ENCODE measurements at regions of chr1 and their contacts with region 1.

Region 1: GRCh38 chr1:116418091-116418830 is 45.2 kb downstream of the ATP1A1 start:
- DNase-seq: peak; percentile 61
- ATAC-seq: peak; percentile 83
- H3K4me3 ChIP-seq: peak overlapping the region; percentile 75 to 94 (median 91)
- H3K27ac ChIP-seq: peak overlapping the region; percentile 82
- H3K4me1 ChIP-seq: peaks cover 73% of the 10 kb centered on the region
- H3K27me3 ChIP-seq: no peaks in the 10 kb centered on the region; a peak in 1 of 5 replicates
- CTCF ChIP-seq: peak; percentile 35; the same call in 1 of the 2 replicates
- EP300 ChIP-seq: no peak; a peak in 1 of 4 replicates
- POLR2A ChIP-seq: peak; percentile 87 to 90
- RAD21 ChIP-seq: peak; percentile 64

Region 2: GRCh38 chr1:116345843-116346242 is 72.4 kb before region 1 on chr1:
- CTCF ChIA-PET with region 1: no interaction called
- POLR2A ChIA-PET with region 1: no interaction called
- in situ Hi-C with region 1: no loop called
- intact Hi-C with region 1: no loop called
- DNase-seq: no peak
- ATAC-seq: no peak
- H3K4me3 ChIP-seq: no peak overlapping the region
- H3K27ac ChIP-seq: no peak overlapping the region
- H3K4me1 ChIP-seq: 0 out of 2 replicates have a peak, but pooled peaks cover 5% of the 10 kb centered on the region
- H3K27me3 ChIP-seq: peaks cover 3 to 4% of the 10 kb centered on the region in 2 experiments; a peak in 1 of 5 replicates
- CTCF ChIP-seq: no peak
- EP300 ChIP-seq: no peak
- POLR2A ChIP-seq: no peak
- RAD21 ChIP-seq: no peak

Region 3: DNA sequence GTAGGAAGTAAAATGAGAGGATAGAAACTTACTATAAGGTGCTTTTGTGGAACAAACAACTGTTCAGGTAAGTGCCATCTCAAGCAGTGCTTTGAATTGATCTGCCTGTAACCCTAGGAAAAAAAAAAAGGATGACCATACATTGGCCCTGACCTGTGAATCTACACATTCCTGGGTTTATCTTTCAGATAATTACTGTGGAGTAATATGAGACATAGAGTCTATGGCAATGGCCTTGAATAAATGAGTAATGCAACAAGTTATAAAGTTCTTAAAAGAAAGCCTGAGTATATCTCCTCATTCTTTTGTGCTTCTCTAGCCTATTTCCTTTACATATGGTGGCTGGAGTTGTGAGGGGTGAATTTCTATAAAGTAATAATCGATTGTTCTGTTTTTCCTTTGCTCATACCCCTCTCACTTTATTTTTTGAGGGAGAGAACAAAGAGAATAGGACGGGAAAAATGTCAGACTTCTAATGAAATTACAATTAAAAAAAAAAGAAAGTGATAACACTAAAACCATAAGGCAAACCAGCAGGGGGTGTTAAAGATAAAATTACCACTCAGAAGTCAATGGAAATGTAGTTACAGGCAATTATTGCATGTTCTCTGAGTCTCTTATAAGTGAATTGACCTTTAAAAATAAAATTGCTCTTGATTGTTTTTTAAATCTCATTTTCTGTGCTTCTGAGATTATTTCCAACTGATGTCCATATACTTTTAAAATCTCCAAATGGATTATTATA is 57.7 kb before region 1 on chr1:
- CTCF ChIA-PET with region 1: no interaction called
- POLR2A ChIA-PET with region 1: no interaction called
- in situ Hi-C with region 1: no loop called
- intact Hi-C with region 1: no loop called
- DNase-seq: no peak
- ATAC-seq: no peak
- H3K4me3 ChIP-seq: no peak overlapping the region
- H3K27ac ChIP-seq: no peak overlapping the region
- H3K4me1 ChIP-seq: peaks cover 35% of the 10 kb centered on the region
- H3K27me3 ChIP-seq: peaks cover 0 to 8% of the 10 kb centered on the region in 2 experiments; a peak in 1 of 5 replicates
- CTCF ChIP-seq: 0 out of 2 replicates have a peak, but pooled peaks have one; percentile 21
- EP300 ChIP-seq: no peak
- POLR2A ChIP-seq: no peak
- RAD21 ChIP-seq: no peak

Region 4: GRCh38 chr1:116377541-116378529 is 40.4 kb before region 1 on chr1:
- CTCF ChIA-PET with region 1: no interaction called
- POLR2A ChIA-PET with region 1: interaction called, 18 read pairs
- in situ Hi-C with region 1: no loop called
- intact Hi-C with region 1: loop called (anchors 5 kb)
- DNase-seq: peak; percentile 79
- ATAC-seq: peak; percentile 21
- H3K4me3 ChIP-seq: peak overlapping the region; percentile 39 to 89 (median 84)
- H3K27ac ChIP-seq: peak overlapping the region; percentile 77
- H3K4me1 ChIP-seq: peaks cover 85% of the 10 kb centered on the region
- H3K27me3 ChIP-seq: peaks cover 0 to 3% of the 10 kb centered on the region in 2 experiments; a peak in 1 of 5 replicates
- CTCF ChIP-seq: no peak
- EP300 ChIP-seq: peak in 1 of 2 experiments; percentile 60; a peak in 2 of 4 replicates
- POLR2A ChIP-seq: peak in 1 of 2 experiments; percentile 41; a peak in 1 of 4 replicates
- RAD21 ChIP-seq: no peak

Region 5: GRCh38 chr1:116433275-116434257 is 15.3 kb after region 1 on chr1:
- CTCF ChIA-PET with region 1: no interaction called
- POLR2A ChIA-PET with region 1: interaction called, 37 read pairs
- in situ Hi-C with region 1: no loop called
- intact Hi-C with region 1: no loop called
- DNase-seq: peak; percentile 93
- ATAC-seq: peak; percentile 94
- H3K4me3 ChIP-seq: peak overlapping the region in 1 of 3 experiments; percentile 54; a peak in 2 of 6 replicates
- H3K27ac ChIP-seq: peak overlapping the region; percentile 53
- H3K4me1 ChIP-seq: peaks cover 52% of the 10 kb centered on the region
- H3K27me3 ChIP-seq: no peaks in the 10 kb centered on the region
- CTCF ChIP-seq: no peak
- EP300 ChIP-seq: peak in 1 of 2 experiments; percentile 50; a peak in 1 of 4 replicates
- POLR2A ChIP-seq: no peak
- RAD21 ChIP-seq: no peak

Region 6: DNA sequence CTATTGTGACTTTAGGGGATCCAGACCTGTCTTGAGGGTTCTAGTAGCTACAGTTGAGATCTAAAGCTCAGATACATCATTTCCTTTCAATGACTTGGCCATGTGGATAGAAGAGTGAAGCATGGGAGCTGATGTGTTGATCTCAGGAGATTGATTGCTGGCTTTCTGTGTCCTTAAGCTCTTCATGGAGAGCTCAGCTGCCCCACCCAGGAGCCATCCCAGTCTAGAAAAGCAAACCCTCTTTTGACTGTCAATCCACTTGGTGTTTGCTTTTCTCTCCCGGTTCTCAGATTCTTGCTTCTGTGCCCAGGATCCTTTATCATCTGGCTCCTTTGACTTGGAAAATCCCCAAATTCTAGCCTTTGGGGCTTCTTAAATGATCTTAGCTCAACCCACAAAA is 42.0 kb after region 1 on chr1:
- CTCF ChIA-PET with region 1: no interaction called
- POLR2A ChIA-PET with region 1: interaction called, 62 read pairs
- in situ Hi-C with region 1: loop called (anchors 5 kb)
- intact Hi-C with region 1: loop called (anchors 5 kb)
- DNase-seq: no peak
- ATAC-seq: peak; percentile 63
- H3K4me3 ChIP-seq: no peak overlapping the region
- H3K27ac ChIP-seq: no peak overlapping the region
- H3K4me1 ChIP-seq: peaks cover 30% of the 10 kb centered on the region
- H3K27me3 ChIP-seq: no peaks in the 10 kb centered on the region
- CTCF ChIP-seq: no peak
- EP300 ChIP-seq: no peak
- POLR2A ChIP-seq: no peak
- RAD21 ChIP-seq: no peak

Region 7: DNA sequence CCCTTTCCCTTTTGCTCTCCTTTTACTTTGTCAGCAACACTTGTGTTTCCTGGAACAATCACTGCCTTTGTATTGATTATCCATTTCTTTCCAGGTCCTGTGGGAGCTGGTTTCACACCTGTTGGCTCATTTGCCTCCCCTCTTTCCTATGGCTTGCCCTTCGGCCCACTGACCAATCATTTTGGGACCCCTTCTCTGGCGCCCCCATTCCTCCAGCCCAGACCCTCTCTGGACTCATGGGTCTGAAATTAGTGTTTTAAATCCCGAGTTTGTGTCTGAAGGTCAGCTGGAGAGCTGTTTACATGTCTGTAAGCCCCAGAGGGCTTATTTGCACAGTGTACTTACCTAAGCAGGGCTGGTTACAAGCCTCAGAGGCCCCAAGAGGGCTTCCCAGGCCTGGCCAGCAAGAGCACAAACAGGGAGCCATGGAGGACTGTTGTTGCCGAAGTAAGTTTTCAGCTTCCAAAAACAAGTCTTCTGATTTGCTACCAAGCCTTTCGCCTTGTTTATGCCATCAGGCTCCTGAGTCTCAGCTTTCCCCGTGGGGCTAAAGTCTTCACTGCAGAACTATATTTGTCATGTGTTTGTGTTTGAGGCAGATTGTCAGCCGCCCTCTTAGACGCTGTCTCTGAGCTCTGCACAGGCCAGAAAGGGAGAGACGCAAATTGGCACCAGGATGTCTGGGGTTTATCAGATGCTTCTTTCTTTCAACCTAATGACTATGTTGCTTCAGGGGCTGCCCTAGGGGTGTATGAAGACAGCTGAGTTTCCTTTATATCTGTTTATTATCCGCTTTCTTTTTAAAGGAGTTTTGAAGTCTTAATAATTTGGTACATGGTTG is 47.8 kb after region 1 on chr1:
- CTCF ChIA-PET with region 1: no interaction called
- POLR2A ChIA-PET with region 1: interaction called, 129 read pairs
- in situ Hi-C with region 1: loop called (anchors 5 kb)
- intact Hi-C with region 1: loop called (anchors 5 kb)
- DNase-seq: peak; percentile 93
- ATAC-seq: peak; percentile 100
- H3K4me3 ChIP-seq: peak overlapping the region; percentile 69 to 79 (median 71)
- H3K27ac ChIP-seq: peak overlapping the region; percentile 99
- H3K4me1 ChIP-seq: peaks cover 70% of the 10 kb centered on the region
- H3K27me3 ChIP-seq: no peaks in the 10 kb centered on the region; a peak in 1 of 5 replicates
- CTCF ChIP-seq: peak; percentile 47
- EP300 ChIP-seq: peak; percentile 71 to 85; a peak in 3 of 4 replicates
- POLR2A ChIP-seq: peak; percentile 74 to 86
- RAD21 ChIP-seq: peak; percentile 35; the same call in 1 of the 2 replicates